Caco-2 (cell line): ENCODE measurements at regions of chr12 and their contacts with region 1.

Region 1: GRCh38 chr12:66359300-66359699 is 57.0 kb downstream of the HELB start:
- DNase-seq: no peak
- H3K4me3 ChIP-seq: no peak overlapping the region
- H3K4me3 Mint-ChIP-seq: no peak overlapping the region
- H3K27ac Mint-ChIP-seq: no peak overlapping the region
- H3K4me1 ChIP-seq: no peaks in the 10 kb centered on the region
- H3K4me1 Mint-ChIP-seq: no peaks in the 10 kb centered on the region
- H3K27me3 ChIP-seq: no peaks in the 10 kb centered on the region
- H3K27me3 Mint-ChIP-seq: no peaks in the 10 kb centered on the region
- CTCF ChIP-seq: no peak

Region 2: GRCh38 chr12:66217342-66217917 is 141.9 kb before region 1 on chr12:
- CTCF ChIA-PET with region 1: no interaction called
- POLR2A ChIA-PET with region 1: no interaction called
- intact Hi-C with region 1: no loop called
- DNase-seq: no peak
- H3K4me3 ChIP-seq: no peak overlapping the region
- H3K4me3 Mint-ChIP-seq: no peak overlapping the region
- H3K27ac Mint-ChIP-seq: no peak overlapping the region
- H3K4me1 ChIP-seq: peaks cover 21% of the 10 kb centered on the region
- H3K4me1 Mint-ChIP-seq: peaks cover 10% of the 10 kb centered on the region
- H3K27me3 ChIP-seq: no peaks in the 10 kb centered on the region
- H3K27me3 Mint-ChIP-seq: no peaks in the 10 kb centered on the region
- CTCF ChIP-seq: no peak

Region 3: GRCh38 chr12:66393890-66394289 is 34.6 kb after region 1 on chr12:
- CTCF ChIA-PET with region 1: no interaction called
- POLR2A ChIA-PET with region 1: no interaction called
- intact Hi-C with region 1: loop called (anchors 5 kb)
- DNase-seq: no peak
- H3K4me3 ChIP-seq: no peak overlapping the region
- H3K4me3 Mint-ChIP-seq: no peak overlapping the region
- H3K27ac Mint-ChIP-seq: no peak overlapping the region
- H3K4me1 ChIP-seq: peaks cover 9% of the 10 kb centered on the region; the same call in 1 of the 2 replicates
- H3K4me1 Mint-ChIP-seq: peaks cover 6% of the 10 kb centered on the region
- H3K27me3 ChIP-seq: no peaks in the 10 kb centered on the region
- H3K27me3 Mint-ChIP-seq: peaks cover 3% of the 10 kb centered on the region
- CTCF ChIP-seq: no peak